ENCODE measurements at regions of chr11 and their contacts with region 1.

Region 1: DNA sequence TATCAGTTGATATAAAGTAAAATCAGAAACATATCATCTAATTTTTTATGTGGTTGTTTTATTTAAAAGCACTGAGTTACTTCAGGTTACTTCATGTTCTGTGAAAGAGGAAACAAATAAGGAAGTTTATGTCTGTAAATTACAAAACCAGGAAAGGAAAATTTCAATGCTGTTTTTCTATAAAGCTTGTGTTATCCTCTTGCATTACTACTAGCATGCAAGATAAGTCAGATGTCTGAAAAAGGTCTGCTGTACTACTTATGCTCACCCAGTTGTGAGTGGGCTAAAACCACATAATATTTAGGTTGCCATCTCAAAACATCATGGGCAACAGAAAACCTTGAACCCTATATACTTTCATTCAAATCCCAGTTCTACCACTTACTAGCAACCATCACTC is 121.5 kb downstream of the ATG16L2 start:
- DNase-seq: no peak
- H3K4me3 ChIP-seq: no peak overlapping the region
- H3K4me3 Mint-ChIP-seq: no peak overlapping the region
- H3K27ac ChIP-seq: no peak overlapping the region
- H3K27ac Mint-ChIP-seq: no peak overlapping the region
- H3K4me1 ChIP-seq: no peaks in the 10 kb centered on the region
- H3K4me1 Mint-ChIP-seq: peaks cover 0 to 2% (median 0%) of the 10 kb centered on the region in 3 donors
- H3K27me3 ChIP-seq: no peaks in the 10 kb centered on the region
- H3K27me3 Mint-ChIP-seq: peaks cover 0 to 2% of the 10 kb centered on the region in 2 donors

Region 2: GRCh38 chr11:72793425-72794367 is 142.0 kb before region 1 on chr11 and contains the start of gene STARD10:
- CTCF ChIA-PET with region 1: no interaction called
- POLR2A ChIA-PET with region 1: no interaction called
- DNase-seq: peak; percentile 91 to 96 (median 95)
- H3K4me3 ChIP-seq: peak within 1 kb of the TSS; percentile 97
- H3K4me3 Mint-ChIP-seq: peak within 1 kb of the TSS; percentile 96 to 100 (median 98)
- H3K27ac ChIP-seq: peak within 1 kb of the TSS; percentile 97
- H3K27ac Mint-ChIP-seq: peak within 1 kb of the TSS; percentile 97 to 100 (median 100)
- H3K4me1 ChIP-seq: peaks cover 20% of the 10 kb centered on the region
- H3K4me1 Mint-ChIP-seq: peaks cover 23 to 32% (median 27%) of the 10 kb centered on the region in 3 donors
- H3K27me3 ChIP-seq: no peaks in the 10 kb centered on the region
- H3K27me3 Mint-ChIP-seq: no peaks in the 10 kb centered on the region
- total RNA-seq, gene STARD10: 13.8 to 15.9 TPM

Region 3: DNA sequence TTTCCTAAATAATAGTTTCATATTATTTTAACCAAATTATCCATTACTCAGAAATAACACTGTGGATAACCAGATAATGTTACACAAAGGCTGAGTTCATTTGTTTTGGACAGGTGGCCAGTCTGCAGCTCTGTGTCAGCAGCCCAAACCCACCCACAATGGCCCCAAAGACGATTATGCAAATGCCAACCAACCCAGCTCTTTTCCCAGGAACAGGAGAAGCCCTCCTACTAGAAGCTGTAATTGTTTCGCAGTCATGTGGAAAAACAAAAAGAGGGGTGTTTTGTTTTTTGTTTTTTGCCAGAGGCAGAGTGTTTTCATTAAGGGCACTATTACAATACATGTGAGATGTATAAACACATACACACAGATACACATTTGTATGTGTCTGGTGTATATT is 104.3 kb after region 1 on chr11:
- CTCF ChIA-PET with region 1: no interaction called
- POLR2A ChIA-PET with region 1: interaction called, 19 read pairs
- DNase-seq: no peak
- H3K4me3 ChIP-seq: no peak overlapping the region
- H3K4me3 Mint-ChIP-seq: no peak overlapping the region
- H3K27ac ChIP-seq: no peak overlapping the region
- H3K27ac Mint-ChIP-seq: peak overlapping the region in 2 of 8 donors; percentile 24 to 35
- H3K4me1 ChIP-seq: peaks cover 3% of the 10 kb centered on the region
- H3K4me1 Mint-ChIP-seq: peaks cover 9 to 38% (median 21%) of the 10 kb centered on the region in 3 donors
- H3K27me3 ChIP-seq: no peaks in the 10 kb centered on the region
- H3K27me3 Mint-ChIP-seq: no peaks in the 10 kb centered on the region

Measured in CD8-positive, alpha-beta memory T cell (primary cell).